Endothelial cell of umbilical vein (primary cell): ENCODE measurements at regions of chr3 and their contacts with region 1.

Region 1: GRCh38 chr3:184561061-184561912 is at the start of gene EPHB3:
- DNase-seq: peak; percentile 99
- H3K4me3 ChIP-seq: peak within 1 kb of the TSS in 1 of 3 experiments; percentile 16
- H3K27ac ChIP-seq: no peak within 1 kb of the TSS
- H3K4me1 ChIP-seq: peaks cover 4% of the 10 kb centered on the region
- H3K27me3 ChIP-seq: peaks cover 44 to 55% of the 10 kb centered on the region in 2 experiments
- CTCF ChIP-seq: peak; percentile 98 to 99
- POLR2A ChIP-seq: no peak
- total RNA-seq, gene EPHB3: not detected in 2 replicates

Region 2: DNA sequence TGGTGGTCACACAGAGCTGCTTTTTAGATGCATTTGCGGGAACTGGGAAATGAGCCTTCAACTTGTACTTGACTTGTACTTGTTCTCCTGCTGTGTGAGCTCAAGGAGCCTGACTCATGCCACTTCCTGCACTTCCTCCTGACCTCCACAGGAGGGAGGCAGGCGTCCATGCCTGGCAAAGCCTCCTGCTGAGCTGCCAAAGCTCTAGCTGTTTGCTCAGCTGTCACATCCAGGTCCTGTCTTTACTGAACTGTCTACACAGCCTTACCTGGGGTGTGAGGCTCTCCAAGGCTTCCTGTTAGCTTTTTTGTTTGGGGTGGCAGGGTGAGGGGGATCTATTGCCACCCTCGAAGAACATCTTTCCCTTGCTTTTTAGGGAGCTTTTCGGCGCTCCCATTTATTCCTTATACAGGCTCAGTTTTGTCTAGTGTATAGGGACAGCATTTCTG is 189.7 kb before region 1 on chr3:
- CTCF ChIA-PET with region 1: interaction called, 10 read pairs
- POLR2A ChIA-PET with region 1: no interaction called
- dilution Hi-C with region 1: no loop called
- intact Hi-C with region 1: no loop called
- DNase-seq: peak; percentile 92
- H3K4me3 ChIP-seq: no peak overlapping the region
- H3K27ac ChIP-seq: no peak overlapping the region
- H3K4me1 ChIP-seq: peaks cover 33% of the 10 kb centered on the region
- H3K27me3 ChIP-seq: peaks cover 7 to 10% of the 10 kb centered on the region in 2 experiments
- CTCF ChIP-seq: peak; percentile 97
- POLR2A ChIP-seq: no peak

Region 3: GRCh38 chr3:184531626-184532280 is 29.5 kb before region 1 on chr3:
- CTCF ChIA-PET with region 1: no interaction called
- POLR2A ChIA-PET with region 1: no interaction called
- dilution Hi-C with region 1: no loop called
- intact Hi-C with region 1: no loop called
- DNase-seq: peak; percentile 41
- H3K4me3 ChIP-seq: peak overlapping the region in 1 of 3 experiments; percentile 19
- H3K27ac ChIP-seq: no peak overlapping the region
- H3K4me1 ChIP-seq: peaks cover 10% of the 10 kb centered on the region
- H3K27me3 ChIP-seq: peaks cover 5 to 11% of the 10 kb centered on the region in 2 experiments
- CTCF ChIP-seq: no peak
- POLR2A ChIP-seq: no peak

Region 4: DNA sequence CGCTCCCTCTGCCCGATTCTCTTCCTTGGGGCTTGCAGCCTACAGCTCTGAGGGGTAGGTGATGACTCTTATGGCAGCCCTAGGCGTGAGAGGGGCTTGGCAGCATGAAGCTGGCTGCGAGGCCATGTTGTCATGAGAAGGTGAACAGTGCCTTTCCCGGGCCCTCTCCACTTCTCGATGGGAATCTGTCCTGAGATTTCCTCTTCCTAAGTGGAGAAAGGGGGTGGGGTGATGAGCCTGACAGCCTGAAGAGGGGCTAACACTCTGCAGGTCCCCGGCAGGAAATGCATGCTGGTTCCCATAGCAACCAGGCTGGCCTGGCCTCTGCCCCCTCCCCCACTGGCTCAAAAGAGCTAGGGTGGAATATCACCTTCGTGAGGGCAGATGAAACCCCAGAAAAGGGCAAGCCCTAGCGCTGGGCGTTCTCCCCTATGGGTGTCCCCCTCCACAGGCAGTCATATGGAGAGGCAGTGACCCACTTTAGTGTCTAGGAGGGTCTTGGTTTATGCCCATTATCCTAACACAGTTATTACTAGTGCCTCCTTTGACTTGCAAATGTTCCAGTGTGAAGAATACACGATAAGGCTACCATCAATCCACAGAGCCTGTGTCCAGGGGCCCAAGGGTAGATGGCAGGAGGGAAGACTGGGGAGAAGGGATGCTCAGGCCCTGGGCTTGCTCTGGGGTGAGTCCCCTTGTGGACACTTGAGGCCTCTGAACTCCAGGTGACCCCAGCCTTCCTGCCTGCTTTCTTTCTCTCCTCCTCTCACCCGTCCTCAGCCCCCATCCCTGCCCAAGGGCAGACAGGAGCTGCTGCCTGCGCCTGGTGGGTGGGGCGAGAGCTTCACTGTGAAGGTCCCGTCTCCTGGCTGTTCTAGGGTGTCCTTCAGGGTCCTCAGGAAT is 13.5 kb after region 1 on chr3:
- CTCF ChIA-PET with region 1: interaction called, 10 read pairs
- POLR2A ChIA-PET with region 1: no interaction called
- dilution Hi-C with region 1: no loop called
- intact Hi-C with region 1: no loop called
- DNase-seq: no peak
- H3K4me3 ChIP-seq: no peak overlapping the region
- H3K27ac ChIP-seq: no peak overlapping the region
- H3K4me1 ChIP-seq: no peaks in the 10 kb centered on the region
- H3K27me3 ChIP-seq: peaks cover 9 to 10% of the 10 kb centered on the region in 2 experiments
- CTCF ChIP-seq: no peak
- POLR2A ChIP-seq: no peak

Region 5: GRCh38 chr3:184711493-184712247 is 150.4 kb after region 1 on chr3 and contains the start of gene MAGEF1:
- CTCF ChIA-PET with region 1: interaction called, 10 read pairs
- POLR2A ChIA-PET with region 1: no interaction called
- dilution Hi-C with region 1: no loop called
- intact Hi-C with region 1: loop called (anchors 1 kb)
- DNase-seq: peak; percentile 57
- H3K4me3 ChIP-seq: peak within 1 kb of the TSS; percentile 25 to 73 (median 73)
- H3K27ac ChIP-seq: no peak within 1 kb of the TSS
- H3K4me1 ChIP-seq: peaks cover 10% of the 10 kb centered on the region
- H3K27me3 ChIP-seq: no peaks in the 10 kb centered on the region
- CTCF ChIP-seq: no peak
- POLR2A ChIP-seq: peak; percentile 28
- total RNA-seq, gene MAGEF1: 13.1 and 14.2 TPM in 2 replicates

Region 6: GRCh38 chr3:184737641-184738535 is 176.6 kb after region 1 on chr3:
- CTCF ChIA-PET with region 1: interaction called, 14 read pairs
- POLR2A ChIA-PET with region 1: no interaction called
- dilution Hi-C with region 1: no loop called
- intact Hi-C with region 1: no loop called
- DNase-seq: peak; percentile 23
- H3K4me3 ChIP-seq: peak overlapping the region in 1 of 3 experiments; percentile 33
- H3K27ac ChIP-seq: peak overlapping the region; percentile 42
- H3K4me1 ChIP-seq: peaks cover 12% of the 10 kb centered on the region
- H3K27me3 ChIP-seq: peaks cover 0 to 4% of the 10 kb centered on the region in 2 experiments
- CTCF ChIP-seq: no peak
- POLR2A ChIP-seq: no peak

Region 7: DNA sequence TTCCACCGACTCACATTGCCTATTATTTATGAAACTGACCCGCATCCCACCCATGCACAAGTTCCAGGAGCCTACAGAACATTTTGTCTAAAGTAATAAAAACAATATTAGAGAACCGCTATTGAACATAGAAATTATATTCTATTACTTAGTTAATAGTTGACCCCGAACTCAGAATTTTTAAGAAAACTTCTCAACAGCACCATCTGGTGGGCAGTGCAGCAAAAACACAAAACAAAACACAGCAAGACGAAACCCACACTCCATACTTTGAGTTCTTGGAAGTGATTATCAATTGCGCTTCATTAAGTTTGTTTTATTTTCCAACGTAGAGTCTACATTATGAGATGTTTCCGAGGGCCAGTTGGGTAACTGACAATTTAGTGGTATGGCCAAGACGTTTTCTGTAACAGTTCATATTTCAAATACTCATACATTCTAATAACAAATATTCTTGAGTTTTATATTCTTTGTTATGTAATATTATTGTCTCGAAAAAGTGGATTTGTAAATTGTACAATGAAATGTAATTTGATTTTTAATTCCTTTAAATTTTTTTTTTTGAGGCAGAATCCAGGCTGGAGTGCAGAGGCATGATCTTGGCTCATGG is 615.6 kb after region 1 on chr3:
- CTCF ChIA-PET with region 1: interaction called, 10 read pairs
- POLR2A ChIA-PET with region 1: no interaction called
- dilution Hi-C with region 1: no loop called
- intact Hi-C with region 1: no loop called
- DNase-seq: peak; percentile 48
- H3K4me3 ChIP-seq: no peak overlapping the region
- H3K27ac ChIP-seq: no peak overlapping the region
- H3K4me1 ChIP-seq: no peaks in the 10 kb centered on the region
- H3K27me3 ChIP-seq: peaks cover 3 to 5% of the 10 kb centered on the region in 2 experiments
- CTCF ChIP-seq: peak; percentile 46 to 60
- POLR2A ChIP-seq: no peak